ENCODE measurements at regions of chr10 and their contacts with region 1.

Region 1: DNA sequence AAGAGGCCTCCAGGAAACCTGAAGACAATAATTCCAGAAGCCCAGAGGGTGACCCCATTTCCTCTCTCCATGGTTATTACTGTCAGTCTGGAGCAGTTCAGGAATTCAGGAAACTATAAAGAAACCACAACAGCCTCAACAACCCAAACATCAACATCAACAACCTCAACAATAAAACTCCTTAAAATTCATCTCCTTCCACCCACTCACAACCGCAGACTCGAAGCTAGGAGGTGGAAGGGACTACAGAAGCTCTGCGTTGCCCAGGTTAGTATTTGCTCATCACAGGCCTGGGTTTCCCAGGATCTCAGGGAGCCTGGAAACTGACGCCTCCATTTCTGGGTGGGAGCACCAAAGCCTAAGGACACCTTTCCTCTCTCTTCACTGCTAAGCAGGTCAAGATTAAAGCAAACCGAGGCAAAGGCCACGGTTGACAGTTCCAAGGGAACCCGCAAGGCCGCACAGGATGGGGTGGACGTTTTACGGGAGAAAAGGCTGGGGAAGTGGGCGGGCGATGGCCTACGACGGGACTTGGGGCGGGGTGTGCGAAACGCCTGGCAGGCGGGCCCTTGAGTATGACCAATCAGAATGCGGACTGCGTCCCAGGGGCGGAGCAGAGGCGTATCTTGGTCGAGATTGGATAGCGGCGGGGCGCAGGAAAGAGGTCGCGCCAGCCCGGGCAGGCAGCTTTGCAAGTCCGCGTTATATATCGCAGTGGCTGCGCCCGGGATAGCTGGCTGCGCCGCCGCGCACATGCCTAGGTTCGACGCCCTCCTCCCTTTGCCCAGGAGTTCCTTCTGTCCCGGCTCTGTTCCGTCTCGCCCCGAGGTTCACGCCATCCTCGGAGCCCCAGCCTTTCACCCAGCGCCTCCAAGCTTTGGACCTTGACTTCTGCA is at the start of gene ELOVL3:
- DNase-seq: peak; percentile 94 to 96 (median 95)
- ATAC-seq: peak; percentile 96 to 99 (median 98)
- H3K4me3 ChIP-seq: peak within 1 kb of the TSS in 10 of 12 donors; percentile 22 to 53 (median 42)
- H3K27ac ChIP-seq: peak within 1 kb of the TSS; percentile 43 to 82 (median 76)
- H3K4me1 ChIP-seq: peaks cover 0 to 32% (median 24%) of the 10 kb centered on the region in 12 donors
- H3K27me3 ChIP-seq: peaks cover under 1 to 17% (median 8%) of the 10 kb centered on the region in 9 donors
- CTCF ChIP-seq: peak in 1 of 12 donors; percentile 12
- POLR2A ChIP-seq: peak in 1 of 2 donors; percentile 47
- total RNA-seq, gene ELOVL3: 0.20 to 0.25 TPM in 2 of 9 donors, not detected in the others

Region 2: GRCh38 chr10:102167861-102168260 is 58.0 kb before region 1 on chr10:
- intact Hi-C with region 1: loop called in 8 of 10 experiments (anchors 2 to 10 kb)
- DNase-seq: no peak
- ATAC-seq: no peak
- H3K4me3 ChIP-seq: no peak overlapping the region
- H3K27ac ChIP-seq: no peak overlapping the region
- H3K4me1 ChIP-seq: peaks cover 0 to 12% (median 2%) of the 10 kb centered on the region in 12 donors
- H3K27me3 ChIP-seq: no peaks in the 10 kb centered on the region
- CTCF ChIP-seq: no peak
- POLR2A ChIP-seq: no peak

Region 3: DNA sequence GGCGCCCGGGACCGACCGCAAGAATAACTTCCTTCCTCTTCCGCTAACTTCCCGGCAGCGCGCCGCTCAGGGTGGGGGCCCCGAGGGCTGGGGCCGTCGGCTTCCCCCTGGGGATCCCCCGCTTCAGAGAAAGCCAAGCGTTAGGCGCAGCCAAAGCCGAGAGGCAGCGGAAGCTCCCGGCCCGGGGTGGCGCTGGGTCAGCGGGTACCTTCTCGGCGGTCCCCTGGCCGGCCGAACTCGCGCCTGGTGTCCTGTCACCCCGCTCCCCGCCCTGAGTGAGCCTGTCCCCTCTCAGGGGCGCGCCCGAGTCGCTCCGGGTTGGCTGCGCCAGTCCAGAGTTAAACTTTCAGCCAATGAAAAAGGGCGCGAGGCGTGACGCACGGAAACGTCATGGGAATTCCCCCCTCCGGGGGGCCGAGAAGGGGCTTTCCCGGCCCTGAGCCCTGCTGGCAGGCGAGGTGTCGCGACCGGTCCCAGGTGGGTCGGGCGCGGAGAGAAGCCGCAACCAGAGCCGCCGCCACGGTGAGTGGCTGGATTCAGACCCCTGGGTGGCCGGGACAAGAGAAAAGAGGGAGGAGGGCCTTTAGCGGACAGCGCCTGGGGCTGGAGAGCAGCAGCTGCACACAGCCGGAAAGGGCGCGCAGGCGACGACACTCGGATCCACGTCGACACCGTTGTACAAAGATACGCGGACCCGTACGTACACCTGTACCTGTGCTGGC is 168.3 kb after region 1 on chr10:
- intact Hi-C with region 1: loop called in 5 of 10 experiments (anchors 2 to 5 kb)
- DNase-seq: peak; percentile 96 to 98 (median 97)
- ATAC-seq: peak; percentile 84 to 94 (median 92)
- H3K4me3 ChIP-seq: peak overlapping the region; percentile 50 to 91 (median 75)
- H3K27ac ChIP-seq: peak overlapping the region; percentile 89 to 99 (median 96)
- H3K4me1 ChIP-seq: peaks cover 3 to 42% (median 26%) of the 10 kb centered on the region in 12 donors
- H3K27me3 ChIP-seq: no peaks in the 10 kb centered on the region
- CTCF ChIP-seq: peak in 10 of 12 donors; percentile 1 to 98 (median 94)
- POLR2A ChIP-seq: peak in 1 of 2 donors; percentile 81

Region 4: DNA sequence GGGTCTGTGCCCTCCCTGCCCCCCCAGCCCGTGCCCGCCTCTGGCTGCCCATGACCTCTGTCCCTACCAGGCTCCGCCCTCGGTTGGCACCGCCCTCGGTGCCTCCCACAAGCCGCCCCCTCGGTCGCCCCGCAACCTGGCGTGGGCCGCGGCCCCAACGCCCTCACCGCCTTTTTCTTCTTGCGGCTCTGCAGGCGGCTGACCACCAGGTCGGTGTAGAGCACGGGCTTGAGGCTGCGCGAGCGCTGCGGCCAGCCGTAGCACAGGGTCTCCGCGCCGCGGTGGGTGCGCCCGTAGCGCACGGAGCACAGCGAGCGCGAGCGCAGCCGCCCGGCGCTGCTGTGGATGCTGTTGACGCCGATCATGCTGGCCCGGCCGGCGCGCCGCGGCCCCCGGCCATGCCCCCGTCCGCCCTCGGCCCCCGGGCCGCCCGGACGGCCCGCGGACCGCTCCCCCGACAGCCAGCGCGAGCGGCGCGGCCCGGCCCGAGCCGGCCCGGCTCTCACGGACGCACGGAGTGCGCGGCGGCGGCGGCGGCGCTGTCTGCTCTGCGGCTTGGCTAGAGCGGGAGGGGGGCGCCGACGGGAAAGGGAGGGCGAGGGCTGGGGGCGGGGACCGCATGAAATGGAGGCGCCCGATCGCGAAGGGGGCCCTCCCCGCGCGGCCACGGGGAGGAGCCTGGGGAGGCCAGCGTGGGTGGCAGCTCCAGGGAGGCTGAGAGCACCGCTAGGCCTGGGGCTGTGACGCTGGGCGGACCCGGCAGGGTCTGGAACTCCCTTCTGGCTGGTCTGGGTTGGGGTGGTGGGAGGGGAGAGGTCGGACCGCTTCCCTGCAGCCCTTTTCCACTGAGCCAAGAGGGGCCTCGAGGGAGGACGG is 183.1 kb after region 1 on chr10:
- intact Hi-C with region 1: loop called in 2 of 10 experiments (anchors 5 kb)
- DNase-seq: peak in 2 of 5 donors; percentile 36 to 56
- ATAC-seq: peak in 3 of 4 donors; percentile 6 to 60 (median 21)
- H3K4me3 ChIP-seq: peak overlapping the region in 10 of 12 donors; percentile 17 to 53 (median 42)
- H3K27ac ChIP-seq: peak overlapping the region in 1 of 12 donors; percentile 99
- H3K4me1 ChIP-seq: peaks cover 0 to 26% (median 9%) of the 10 kb centered on the region in 12 donors
- H3K27me3 ChIP-seq: peaks cover 20 to 66% (median 39%) of the 10 kb centered on the region in 9 donors
- CTCF ChIP-seq: no peak
- POLR2A ChIP-seq: no peak

Region 5: GRCh38 chr10:102583435-102584417 is 357.8 kb after region 1 on chr10:
- intact Hi-C with region 1: loop called in 4 of 10 experiments (anchors 5 to 10 kb)
- DNase-seq: peak; percentile 81 to 89 (median 86)
- ATAC-seq: peak; percentile 84 to 95 (median 90)
- H3K4me3 ChIP-seq: no peak overlapping the region
- H3K27ac ChIP-seq: no peak overlapping the region
- H3K4me1 ChIP-seq: peaks cover 0 to 33% (median 11%) of the 10 kb centered on the region in 12 donors
- H3K27me3 ChIP-seq: no peaks in the 10 kb centered on the region
- CTCF ChIP-seq: peak; percentile 79 to 94 (median 88)
- POLR2A ChIP-seq: no peak

Measured in heart left ventricle (tissue), 16 donors.